ENCODE measurements at regions of chr1 and their contacts with region 1.

Region 1: GRCh38 chr1:234772345-234773147 is 162.6 kb upstream of the IRF2BP2 start:
- DNase-seq: peak; percentile 96
- H3K4me3 ChIP-seq: no peak overlapping the region
- H3K27me3 ChIP-seq: 0 out of 2 replicates have a peak, but pooled peaks cover 2% of the 10 kb centered on the region
- CTCF ChIP-seq: no peak

Region 2: GRCh38 chr1:234722904-234723720 is 49.4 kb before region 1 on chr1:
- CTCF ChIA-PET with region 1: no interaction called
- POLR2A ChIA-PET with region 1: interaction called, 15 read pairs
- DNase-seq: peak; percentile 74
- H3K4me3 ChIP-seq: no peak overlapping the region
- H3K27me3 ChIP-seq: no peaks in the 10 kb centered on the region
- CTCF ChIP-seq: no peak

Region 3: GRCh38 chr1:234755449-234755863 is 17.1 kb before region 1 on chr1:
- CTCF ChIA-PET with region 1: no interaction called
- POLR2A ChIA-PET with region 1: no interaction called
- DNase-seq: peak; percentile 41
- H3K4me3 ChIP-seq: no peak overlapping the region
- H3K27me3 ChIP-seq: no peaks in the 10 kb centered on the region
- CTCF ChIP-seq: no peak

Region 4: GRCh38 chr1:234962340-234962989 is 189.9 kb after region 1 on chr1:
- CTCF ChIA-PET with region 1: no interaction called
- POLR2A ChIA-PET with region 1: interaction called, 12 read pairs
- DNase-seq: peak; percentile 99
- H3K4me3 ChIP-seq: no peak overlapping the region
- H3K27me3 ChIP-seq: no peaks in the 10 kb centered on the region
- CTCF ChIP-seq: no peak

Region 5: GRCh38 chr1:235113183-235113917 is 340.8 kb after region 1 on chr1:
- CTCF ChIA-PET with region 1: no interaction called
- POLR2A ChIA-PET with region 1: no interaction called
- DNase-seq: no peak
- H3K4me3 ChIP-seq: no peak overlapping the region
- H3K27me3 ChIP-seq: no peaks in the 10 kb centered on the region
- CTCF ChIP-seq: no peak

Measured in BJ (cell line).